Activated CD4-positive, alpha-beta T cell treated with anti-CD3 and anti-CD28 coated beads for 36 hours (primary cell): ENCODE measurements at regions of chr18 and their contacts with region 1.

Region 1: GRCh38 chr18:49813319-49814146 is at the start of gene ACAA2:
- DNase-seq: peak; percentile 92
- ATAC-seq: peak; percentile 93
- H3K4me3 Mint-ChIP-seq: peak within 1 kb of the TSS; percentile 93
- H3K27ac Mint-ChIP-seq: peak within 1 kb of the TSS; percentile 98
- H3K4me1 Mint-ChIP-seq: peaks cover 47% of the 10 kb centered on the region
- H3K27me3 Mint-ChIP-seq: no peaks in the 10 kb centered on the region
- total RNA-seq, gene ACAA2: 63.4 to 75.2 TPM

Region 2: DNA sequence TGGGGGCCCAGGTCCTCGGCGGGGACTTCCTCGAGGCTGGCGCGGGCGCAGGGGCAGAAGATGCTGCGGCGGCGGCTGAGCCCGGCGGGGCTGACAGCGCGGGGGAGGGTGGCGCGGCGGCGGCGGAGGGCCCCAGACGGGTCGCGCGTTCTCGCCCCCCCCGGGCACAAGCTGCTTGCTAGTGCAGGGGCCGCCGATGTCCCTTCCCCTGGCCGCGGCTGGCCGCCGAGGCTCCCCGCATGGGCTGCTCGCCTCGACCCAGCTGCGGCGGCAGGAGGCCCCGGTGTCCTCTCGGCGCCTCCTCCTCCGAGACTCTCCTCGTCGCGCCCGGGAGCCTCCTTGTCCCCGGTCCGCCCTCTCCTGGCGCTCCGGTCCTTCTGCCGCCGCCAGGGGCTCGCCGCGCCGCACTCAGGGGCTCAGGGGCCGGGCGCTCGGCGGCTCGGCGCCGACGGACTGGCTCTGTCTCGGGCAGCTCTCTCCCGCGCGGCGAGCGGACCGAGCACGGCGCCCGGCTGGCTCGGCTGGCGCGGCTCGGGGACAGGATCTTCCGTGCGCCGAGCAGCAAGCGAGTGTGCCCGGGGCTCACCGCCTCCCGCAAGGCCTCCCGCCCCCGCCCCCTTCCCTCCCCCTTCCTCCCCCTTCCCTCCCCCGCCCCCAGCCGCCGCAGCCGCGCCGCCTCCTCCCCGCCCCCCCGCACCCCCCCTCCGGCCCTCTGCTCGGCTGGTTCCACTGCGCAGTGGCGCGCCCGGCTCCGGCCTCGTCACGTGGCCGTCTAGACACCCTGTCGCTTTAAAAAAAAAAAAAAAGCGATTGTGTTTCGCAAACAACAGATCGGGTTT is 861.9 kb before region 1 on chr18:
- CTCF ChIA-PET with region 1: no interaction called
- POLR2A ChIA-PET with region 1: no interaction called
- intact Hi-C with region 1: loop called in 1 of 2 experiments (anchors 5 kb)
- DNase-seq: peak; percentile 84
- ATAC-seq: peak; percentile 42
- H3K4me3 Mint-ChIP-seq: peak overlapping the region; percentile 97
- H3K27ac Mint-ChIP-seq: peak overlapping the region; percentile 88
- H3K4me1 Mint-ChIP-seq: peaks cover 41% of the 10 kb centered on the region
- H3K27me3 Mint-ChIP-seq: no peaks in the 10 kb centered on the region

Region 3: GRCh38 chr18:49459404-49460171 is 353.9 kb before region 1 on chr18:
- CTCF ChIA-PET with region 1: no interaction called
- POLR2A ChIA-PET with region 1: no interaction called
- intact Hi-C with region 1: loop called (anchors 1 kb)
- DNase-seq: peak; percentile 59
- ATAC-seq: peak; percentile 43
- H3K4me3 Mint-ChIP-seq: peak overlapping the region; percentile 82
- H3K27ac Mint-ChIP-seq: peak overlapping the region; percentile 69
- H3K4me1 Mint-ChIP-seq: peaks cover 36% of the 10 kb centered on the region
- H3K27me3 Mint-ChIP-seq: no peaks in the 10 kb centered on the region

Region 4: DNA sequence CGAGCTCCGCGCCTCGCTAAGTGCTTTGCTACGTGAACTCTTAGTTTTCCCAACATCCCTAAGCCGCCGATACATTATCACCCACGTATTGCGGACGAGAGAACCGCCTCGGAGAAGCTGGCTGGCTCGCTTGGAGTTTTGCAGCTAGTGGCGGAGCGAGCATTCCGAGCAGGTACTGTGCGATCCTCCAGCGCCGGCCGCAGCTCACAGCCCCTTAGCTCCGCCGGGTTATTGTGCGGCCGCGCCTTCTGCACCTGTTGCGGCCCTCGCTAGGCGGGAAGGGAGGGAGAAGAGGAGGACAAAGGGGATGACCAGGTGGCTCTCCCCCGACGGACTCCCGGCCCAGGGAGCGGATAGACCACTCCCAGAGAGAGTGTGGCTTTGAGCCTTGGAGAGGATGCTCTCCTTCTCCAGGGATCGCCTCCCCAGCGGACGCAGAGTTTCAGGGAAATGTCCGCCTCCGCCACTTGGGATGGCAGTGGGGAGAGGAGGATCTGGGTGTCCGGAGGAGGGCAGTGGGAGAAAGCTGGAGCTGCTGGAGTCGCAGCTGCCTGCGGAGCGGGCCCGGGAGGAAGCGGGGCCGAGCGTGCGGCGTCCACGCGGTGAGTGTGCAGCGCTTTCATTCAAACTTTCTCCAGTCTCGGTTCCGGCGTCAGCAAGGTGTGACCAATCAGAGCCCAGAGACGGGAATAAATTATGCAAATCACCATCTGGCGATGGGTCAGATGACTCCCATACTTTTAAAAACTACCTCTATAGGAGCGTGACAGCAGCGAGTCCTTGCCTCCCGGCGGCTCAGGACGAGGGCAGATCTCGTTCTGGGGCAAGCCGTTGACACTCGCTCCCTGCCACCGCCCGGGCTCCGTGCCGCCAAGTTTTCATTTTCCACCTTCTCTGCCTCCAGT is 252.0 kb before region 1 on chr18 and contains the start of gene LIPG:
- CTCF ChIA-PET with region 1: interaction called, 3 read pairs
- POLR2A ChIA-PET with region 1: no interaction called
- intact Hi-C with region 1: loop called in 1 of 2 experiments (anchors 2 kb)
- DNase-seq: peak; percentile 79
- ATAC-seq: peak; percentile 86
- H3K4me3 Mint-ChIP-seq: peak within 1 kb of the TSS; percentile 63
- H3K27ac Mint-ChIP-seq: peak within 1 kb of the TSS; percentile 49
- H3K4me1 Mint-ChIP-seq: peaks cover 32% of the 10 kb centered on the region
- H3K27me3 Mint-ChIP-seq: peaks cover 59% of the 10 kb centered on the region
- total RNA-seq, gene LIPG: 0.71 to 0.79 TPM

Region 5: GRCh38 chr18:50266248-50266704 is 452.7 kb after region 1 on chr18 and contains the start of gene CFAP53:
- CTCF ChIA-PET with region 1: no interaction called
- POLR2A ChIA-PET with region 1: no interaction called
- intact Hi-C with region 1: loop called in 1 of 2 experiments (anchors 10 kb)
- DNase-seq: peak; percentile 92
- ATAC-seq: peak; percentile 93
- H3K4me3 Mint-ChIP-seq: peak within 1 kb of the TSS; percentile 71
- H3K27ac Mint-ChIP-seq: peak within 1 kb of the TSS; percentile 57
- H3K4me1 Mint-ChIP-seq: peaks cover 20% of the 10 kb centered on the region
- H3K27me3 Mint-ChIP-seq: no peaks in the 10 kb centered on the region
- total RNA-seq, gene CFAP53: 0.37 to 0.44 TPM

Region 6: DNA sequence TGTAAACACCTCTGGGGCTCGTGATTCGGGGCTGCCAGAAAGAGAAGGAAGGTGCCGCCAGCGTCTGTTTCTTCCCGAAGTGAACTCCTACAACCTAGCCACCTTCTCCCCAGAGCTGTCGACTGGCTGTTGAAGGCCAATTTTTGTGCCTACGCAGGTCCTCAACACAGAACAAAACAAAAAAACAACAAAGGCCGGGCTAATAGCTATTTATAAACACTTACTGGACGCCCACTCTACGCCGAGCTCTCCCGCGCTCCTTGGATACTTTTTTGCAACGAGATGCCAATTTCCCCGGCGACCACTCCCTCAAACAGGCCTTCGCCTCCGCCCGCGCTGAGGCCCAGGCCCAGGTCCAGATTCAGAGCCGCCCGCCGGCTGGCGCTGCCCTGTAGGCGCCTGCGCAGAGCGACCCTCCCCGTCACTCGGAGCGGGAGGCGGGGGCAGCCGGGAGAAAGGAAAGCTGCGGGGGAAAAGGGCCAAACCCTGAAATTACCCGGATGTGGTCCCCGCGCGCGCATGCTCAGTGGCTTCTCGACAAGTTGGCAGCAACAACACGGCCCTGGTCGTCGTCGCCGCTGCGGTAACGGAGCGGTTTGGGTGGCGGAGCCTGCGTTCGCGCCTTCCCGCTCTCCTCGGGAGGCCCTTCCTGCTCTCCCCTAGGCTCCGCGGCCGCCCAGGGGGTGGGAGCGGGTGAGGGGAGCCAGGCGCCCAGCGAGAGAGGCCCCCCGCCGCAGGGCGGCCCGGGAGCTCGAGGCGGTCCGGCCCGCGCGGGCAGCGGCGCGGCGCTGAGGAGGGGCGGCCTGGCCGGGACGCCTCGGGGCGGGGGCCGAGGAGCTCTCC is 1216.4 kb after region 1 on chr18 and contains the start of gene SMAD4:
- CTCF ChIA-PET with region 1: no interaction called
- POLR2A ChIA-PET with region 1: no interaction called
- intact Hi-C with region 1: loop called in 1 of 2 experiments (anchors 5 kb)
- DNase-seq: peak; percentile 99
- ATAC-seq: peak; percentile 84
- H3K4me3 Mint-ChIP-seq: peak within 1 kb of the TSS; percentile 85
- H3K27ac Mint-ChIP-seq: peak within 1 kb of the TSS; percentile 94
- H3K4me1 Mint-ChIP-seq: peaks cover 55% of the 10 kb centered on the region
- H3K27me3 Mint-ChIP-seq: no peaks in the 10 kb centered on the region
- total RNA-seq, gene SMAD4: 79.3 to 89.5 TPM